Transverse colon (tissue), 4 donors: ENCODE measurements at regions of chr16 and their contacts with region 1.

Region 1: DNA sequence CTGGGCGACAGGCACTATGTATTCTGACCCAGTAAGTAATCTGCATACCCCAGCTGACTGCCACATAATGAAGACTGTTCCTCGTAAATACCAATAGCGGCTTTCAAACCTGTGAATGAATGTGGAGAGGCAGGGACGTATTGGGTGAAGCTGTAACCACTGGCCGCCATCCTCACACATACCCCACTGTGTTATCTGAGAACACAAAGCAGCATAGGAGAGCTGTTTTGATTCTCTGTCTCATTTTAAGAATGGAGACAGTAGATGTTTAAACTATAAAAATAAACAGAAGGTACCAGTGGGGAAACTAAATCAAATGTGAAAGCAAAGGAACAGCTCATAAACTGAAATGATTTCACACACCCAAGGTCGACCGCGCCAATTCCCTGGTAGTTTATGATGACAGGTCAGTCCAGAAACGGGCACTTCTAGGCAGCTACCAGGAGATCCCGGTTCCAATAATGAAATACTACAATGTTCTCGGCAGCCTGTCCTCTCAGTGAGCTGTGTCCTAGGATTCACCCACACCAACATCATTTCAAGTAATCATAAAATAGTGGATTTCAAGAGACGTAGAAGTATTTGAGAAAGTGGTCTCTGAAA is 109.7 kb downstream of the ADCY9 start:
- DNase-seq: peak; percentile 60
- H3K4me3 ChIP-seq: no peak overlapping the region
- H3K27ac ChIP-seq: peak overlapping the region in 3 of 4 donors; percentile 27 to 47 (median 41)
- H3K4me1 ChIP-seq: peaks cover 0 to 11% (median 3%) of the 10 kb centered on the region in 4 donors
- H3K27me3 ChIP-seq: no peaks in the 10 kb centered on the region
- CTCF ChIP-seq: no peak
- EP300 ChIP-seq: no peak
- POLR2A ChIP-seq: no peak

Region 2: GRCh38 chr16:4032768-4033167 is 26.3 kb after region 1 on chr16:
- in situ Hi-C with region 1: no loop called
- intact Hi-C with region 1: no loop called
- DNase-seq: peak; percentile 73
- H3K4me3 ChIP-seq: no peak overlapping the region
- H3K27ac ChIP-seq: peak overlapping the region in 3 of 4 donors; percentile 1 to 56 (median 16)
- H3K4me1 ChIP-seq: peaks cover 0 to 13% (median 2%) of the 10 kb centered on the region in 4 donors
- H3K27me3 ChIP-seq: no peaks in the 10 kb centered on the region
- CTCF ChIP-seq: no peak
- EP300 ChIP-seq: no peak
- POLR2A ChIP-seq: no peak

Region 3: DNA sequence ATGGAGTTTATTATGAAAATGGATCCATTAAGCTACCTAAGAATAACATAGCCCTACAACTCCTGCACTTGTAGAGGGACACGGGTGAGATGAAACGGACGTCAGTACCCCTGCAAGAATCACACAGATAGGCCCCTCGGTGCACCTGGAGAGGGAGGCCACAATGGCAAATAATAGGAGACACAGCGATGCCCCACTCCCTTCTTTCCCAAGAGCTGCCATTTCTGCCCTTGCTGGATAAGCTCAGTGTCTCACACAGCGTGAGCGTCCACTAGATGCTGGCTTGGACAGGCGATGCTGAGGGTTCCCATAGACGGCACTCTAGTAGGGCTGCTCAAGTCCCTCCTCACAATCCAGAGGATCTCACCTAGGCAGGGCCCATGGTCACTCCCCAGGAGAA is 42.0 kb after region 1 on chr16:
- in situ Hi-C with region 1: no loop called
- intact Hi-C with region 1: loop called (anchors 1 kb)
- DNase-seq: no peak
- H3K4me3 ChIP-seq: no peak overlapping the region
- H3K27ac ChIP-seq: no peak overlapping the region
- H3K4me1 ChIP-seq: peaks cover 10 to 28% (median 23%) of the 10 kb centered on the region in 4 donors
- H3K27me3 ChIP-seq: no peaks in the 10 kb centered on the region
- CTCF ChIP-seq: no peak
- EP300 ChIP-seq: no peak
- POLR2A ChIP-seq: no peak